ENCODE measurements at regions of chr15 and their contacts with region 1.

Region 1: GRCh38 chr15:67833710-67834511 is 5.9 kb downstream of the RNU6-1 start:
- DNase-seq: peak in 1 of 2 donors; percentile 79
- ATAC-seq: peak; percentile 39
- H3K4me3 ChIP-seq: no peak overlapping the region
- H3K27ac ChIP-seq: no peak overlapping the region
- H3K4me1 ChIP-seq: no peaks in the 10 kb centered on the region
- H3K27me3 ChIP-seq: no peaks in the 10 kb centered on the region

Region 2: DNA sequence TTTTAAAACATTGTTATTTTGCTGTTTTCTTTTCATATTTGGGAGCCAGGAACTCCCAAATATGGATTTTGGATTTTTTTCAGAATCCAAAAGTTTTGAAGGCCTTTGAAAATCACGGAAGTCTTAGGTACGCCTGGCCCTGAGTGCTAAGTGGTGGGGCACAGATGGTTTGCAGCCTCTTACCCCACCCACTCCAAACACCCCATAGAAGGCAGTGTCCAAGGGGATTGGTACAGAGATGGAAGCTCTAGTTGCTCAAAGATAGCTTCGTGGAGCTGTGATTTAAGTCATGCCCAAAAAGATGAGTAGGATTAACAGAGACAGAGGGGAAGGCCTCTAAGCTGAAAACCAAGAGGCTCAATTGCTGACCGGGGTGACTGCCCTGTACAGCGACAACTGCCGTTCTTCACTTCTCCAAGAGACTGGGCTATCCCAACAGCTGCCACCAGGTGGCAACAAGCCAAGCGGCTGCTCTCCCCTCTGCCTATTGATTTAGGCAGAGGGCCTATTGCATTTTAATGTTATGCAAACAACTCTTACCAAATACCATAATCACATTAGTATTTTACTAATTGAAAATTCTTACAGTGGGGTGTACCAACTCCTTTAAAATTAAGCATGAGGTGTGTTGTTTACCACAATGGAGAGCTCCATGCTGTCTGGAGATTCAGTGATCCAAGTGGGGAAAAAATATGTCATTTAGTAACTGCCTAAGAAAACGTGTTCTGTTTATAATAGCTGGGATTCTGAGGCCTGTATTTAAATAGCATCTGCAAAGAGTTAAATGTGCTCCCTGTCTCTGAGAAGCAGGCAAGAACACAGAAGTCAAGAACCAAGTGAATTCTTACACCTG is 377.0 kb before region 1 on chr15:
- intact Hi-C with region 1: loop called (anchors 2 to 5 kb)
- DNase-seq: peak; percentile 87 to 93
- ATAC-seq: peak; percentile 67
- H3K4me3 ChIP-seq: no peak overlapping the region
- H3K27ac ChIP-seq: no peak overlapping the region
- H3K4me1 ChIP-seq: no peaks in the 10 kb centered on the region
- H3K27me3 ChIP-seq: no peaks in the 10 kb centered on the region

Region 3: DNA sequence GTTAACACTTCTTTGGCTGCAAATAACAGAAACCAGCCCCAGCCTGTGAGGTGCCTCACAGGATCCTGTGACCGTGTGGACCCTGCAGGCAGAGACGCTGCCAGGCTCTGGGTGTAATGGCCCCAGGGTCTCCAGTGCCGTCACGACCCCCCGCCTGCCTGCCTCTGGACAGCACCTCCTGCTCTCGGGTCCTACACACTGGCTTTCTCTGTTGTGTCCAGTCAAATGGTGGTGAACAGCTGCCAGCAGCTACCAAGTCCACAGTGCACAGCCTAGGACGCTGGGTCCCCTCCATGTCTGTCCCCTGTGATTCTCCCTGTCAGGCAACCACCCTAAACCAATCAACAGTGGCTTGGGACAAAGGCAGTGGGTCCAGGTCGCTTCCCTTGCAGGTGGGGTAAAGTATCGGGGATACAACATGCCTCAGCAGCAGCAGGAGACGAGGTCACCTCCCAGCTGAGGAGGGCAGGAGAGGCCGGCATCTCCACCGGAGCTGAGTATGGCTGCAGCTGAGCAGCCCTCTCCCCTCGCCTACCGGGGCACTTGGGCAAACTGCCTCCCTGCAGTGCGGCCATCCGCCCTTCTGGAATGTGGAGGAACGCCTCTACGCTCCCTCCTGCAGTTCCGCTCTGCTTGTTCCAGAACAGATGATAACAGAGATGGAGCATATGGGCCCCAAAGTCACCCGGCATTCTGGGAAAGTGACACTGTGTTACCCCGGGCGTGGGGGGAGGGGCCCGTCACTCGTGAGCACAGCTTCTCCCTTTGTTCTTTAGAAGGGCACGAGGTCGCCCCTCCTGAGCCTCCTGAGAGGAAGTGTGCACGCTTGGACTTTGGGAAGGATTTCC is 29.7 kb before region 1 on chr15:
- intact Hi-C with region 1: no loop called
- DNase-seq: peak in 1 of 2 donors; percentile 63
- ATAC-seq: no peak
- H3K4me3 ChIP-seq: no peak overlapping the region
- H3K27ac ChIP-seq: no peak overlapping the region
- H3K4me1 ChIP-seq: no peaks in the 10 kb centered on the region
- H3K27me3 ChIP-seq: no peaks in the 10 kb centered on the region

Region 4: GRCh38 chr15:67906382-67906781 is 72.5 kb after region 1 on chr15:
- intact Hi-C with region 1: no loop called
- DNase-seq: no peak
- ATAC-seq: no peak
- H3K4me3 ChIP-seq: no peak overlapping the region
- H3K27ac ChIP-seq: no peak overlapping the region
- H3K4me1 ChIP-seq: peaks cover 0 to 3% of the 10 kb centered on the region in 2 donors
- H3K27me3 ChIP-seq: no peaks in the 10 kb centered on the region

Measured in aorta (tissue), 5 donors.